Activated CD4-positive, alpha-beta memory T cell treated with anti-CD3 and anti-CD28 coated beads for 36 hours (primary cell): ENCODE measurements at regions of chr11 and their contacts with region 1.

Region 1: DNA sequence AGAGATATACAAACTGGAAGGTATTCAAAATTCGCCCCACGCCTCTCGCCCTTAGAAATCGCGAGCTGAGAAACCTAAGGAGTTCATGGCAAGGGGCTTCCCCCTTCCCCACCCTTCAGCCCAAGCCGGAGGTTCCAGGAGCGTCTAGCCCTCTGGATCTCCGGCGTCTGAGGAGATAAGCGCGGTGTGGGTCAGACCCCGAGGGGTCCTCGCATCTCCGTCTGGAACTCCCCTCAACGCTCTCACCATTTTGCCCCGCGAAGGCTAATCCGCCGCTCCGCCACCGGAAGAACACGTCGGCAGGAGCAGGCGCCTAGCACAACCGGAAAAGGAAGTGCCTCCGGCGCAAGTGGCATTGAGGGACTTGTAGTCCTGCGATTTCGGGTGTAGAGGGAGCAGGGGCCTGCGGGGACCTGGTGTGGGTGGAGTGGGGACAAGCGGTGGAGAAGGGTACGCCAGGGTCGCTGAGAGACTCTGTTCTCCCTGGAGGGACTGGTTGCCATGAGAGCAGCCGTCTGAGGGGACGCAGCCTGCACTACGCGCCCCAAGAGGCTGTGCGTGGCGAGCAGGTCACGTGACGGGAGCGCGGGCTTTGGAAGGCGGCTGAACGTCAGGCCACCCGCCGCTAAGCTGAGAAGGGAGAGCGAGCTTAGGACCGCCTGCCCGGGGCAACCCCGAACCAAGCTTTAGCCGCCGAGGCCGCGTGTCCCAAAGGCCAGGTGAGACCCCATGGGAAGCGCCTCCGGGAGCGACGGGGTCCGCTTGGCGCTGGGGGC is at the starts of genes FEN1 and TMEM258:
- DNase-seq: peak; percentile 92
- H3K4me3 Mint-ChIP-seq: peak within 1 kb of the TSS; percentile 88
- H3K27ac Mint-ChIP-seq: peak within 1 kb of the TSS; percentile 99
- H3K4me1 Mint-ChIP-seq: peaks cover 47% of the 10 kb centered on the region
- H3K27me3 Mint-ChIP-seq: no peaks in the 10 kb centered on the region
- total RNA-seq, gene FEN1: 108 to 111 TPM
- total RNA-seq, gene TMEM258: 191 to 192 TPM

Region 2: GRCh38 chr11:61281581-61282250 is 510.8 kb before region 1 on chr11:
- CTCF ChIA-PET with region 1: no interaction called
- POLR2A ChIA-PET with region 1: no interaction called
- intact Hi-C with region 1: no loop called
- DNase-seq: peak; percentile 36
- H3K4me3 Mint-ChIP-seq: no peak overlapping the region
- H3K27ac Mint-ChIP-seq: no peak overlapping the region
- H3K4me1 Mint-ChIP-seq: no peaks in the 10 kb centered on the region
- H3K27me3 Mint-ChIP-seq: no peaks in the 10 kb centered on the region

Region 3: GRCh38 chr11:61711498-61711897 is 81.0 kb before region 1 on chr11:
- CTCF ChIA-PET with region 1: no interaction called
- POLR2A ChIA-PET with region 1: no interaction called
- intact Hi-C with region 1: no loop called
- DNase-seq: no peak
- H3K4me3 Mint-ChIP-seq: no peak overlapping the region
- H3K27ac Mint-ChIP-seq: no peak overlapping the region
- H3K4me1 Mint-ChIP-seq: no peaks in the 10 kb centered on the region
- H3K27me3 Mint-ChIP-seq: no peaks in the 10 kb centered on the region

Region 4: DNA sequence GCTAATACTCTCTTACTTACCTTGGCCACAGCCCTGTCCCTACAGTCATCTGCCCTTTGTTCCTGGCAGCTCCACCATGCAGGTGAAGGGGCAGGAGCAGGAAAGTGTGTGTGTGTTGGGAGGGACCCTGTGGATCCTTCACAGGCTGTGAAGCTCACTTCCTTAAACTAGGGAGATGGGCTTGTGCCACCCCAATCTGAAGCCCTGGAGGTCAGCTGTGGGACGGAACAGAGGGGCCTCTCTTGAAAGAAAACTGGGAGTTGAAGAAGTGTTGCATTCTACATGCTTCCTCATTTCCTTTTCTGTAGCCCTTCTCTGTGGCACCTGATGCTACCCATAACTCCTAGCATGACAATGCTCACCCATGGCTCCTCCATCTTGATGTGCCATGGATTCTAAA is 12.6 kb after region 1 on chr11:
- CTCF ChIA-PET with region 1: interaction called, 82 read pairs
- POLR2A ChIA-PET with region 1: interaction called, 9 read pairs
- intact Hi-C with region 1: no loop called
- DNase-seq: no peak
- H3K4me3 Mint-ChIP-seq: no peak overlapping the region
- H3K27ac Mint-ChIP-seq: no peak overlapping the region
- H3K4me1 Mint-ChIP-seq: no peaks in the 10 kb centered on the region
- H3K27me3 Mint-ChIP-seq: no peaks in the 10 kb centered on the region

Region 5: GRCh38 chr11:61816736-61817455 is 24.4 kb after region 1 on chr11 and contains the start of gene FADS1:
- CTCF ChIA-PET with region 1: interaction called, 82 read pairs
- POLR2A ChIA-PET with region 1: interaction called, 26 read pairs
- intact Hi-C with region 1: loop called (anchors 2 kb)
- DNase-seq: peak; percentile 92
- H3K4me3 Mint-ChIP-seq: peak within 1 kb of the TSS; percentile 83
- H3K27ac Mint-ChIP-seq: peak within 1 kb of the TSS; percentile 65
- H3K4me1 Mint-ChIP-seq: peaks cover 10% of the 10 kb centered on the region
- H3K27me3 Mint-ChIP-seq: peaks cover 12% of the 10 kb centered on the region
- total RNA-seq, gene FADS1: 24.9 to 26.5 TPM

Region 6: DNA sequence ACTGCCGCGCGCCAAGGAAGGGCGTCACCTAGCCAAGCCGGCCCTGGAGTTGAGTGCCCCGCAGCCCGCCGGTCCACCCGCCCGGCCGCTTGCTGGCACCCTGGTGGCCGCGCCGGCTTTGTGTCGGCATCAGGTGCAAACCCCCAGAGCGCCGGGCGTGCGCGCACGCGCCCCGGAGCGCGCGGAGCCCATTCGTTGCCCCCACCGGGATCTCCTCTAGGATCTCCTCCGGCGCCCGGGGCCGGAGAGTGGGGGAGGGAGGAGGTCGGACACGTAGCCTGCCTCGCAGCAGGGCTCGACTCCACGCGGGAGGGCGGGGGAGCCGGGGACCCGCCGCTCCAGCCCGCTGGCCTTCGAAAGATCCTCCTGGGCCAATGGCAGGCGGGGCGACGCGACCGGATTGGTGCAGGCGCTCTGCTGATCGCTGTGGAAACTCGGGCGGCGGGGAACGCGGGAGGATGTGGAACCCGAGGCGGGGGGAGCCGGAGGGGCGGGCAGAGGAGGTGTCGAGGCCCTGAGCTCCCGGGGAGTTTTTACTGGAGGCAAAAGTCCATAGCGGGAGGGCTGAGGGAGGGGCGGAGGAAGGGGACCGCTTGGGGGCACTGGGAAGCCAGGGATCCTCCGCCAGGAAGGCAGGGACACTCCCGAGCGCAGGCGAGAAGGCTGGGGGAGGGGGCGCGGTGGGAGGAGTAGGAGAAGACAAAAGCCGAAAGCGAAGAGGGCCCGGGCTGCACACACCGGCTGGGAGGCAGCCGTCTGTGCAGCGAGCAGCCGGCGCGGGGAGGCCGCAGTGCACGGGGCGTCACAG is 35.3 kb after region 1 on chr11 and contains the start of gene FADS2:
- CTCF ChIA-PET with region 1: interaction called, 5 read pairs
- POLR2A ChIA-PET with region 1: interaction called, 8 read pairs
- intact Hi-C with region 1: loop called (anchors 5 kb)
- DNase-seq: peak; percentile 89
- H3K4me3 Mint-ChIP-seq: peak within 1 kb of the TSS; percentile 85
- H3K27ac Mint-ChIP-seq: peak within 1 kb of the TSS; percentile 52
- H3K4me1 Mint-ChIP-seq: peaks cover 8% of the 10 kb centered on the region
- H3K27me3 Mint-ChIP-seq: peaks cover 15% of the 10 kb centered on the region
- total RNA-seq, gene FADS2: 58.2 to 60.8 TPM

Region 7: GRCh38 chr11:61947486-61948210 is 155.2 kb after region 1 on chr11:
- CTCF ChIA-PET with region 1: interaction called, 33 read pairs
- POLR2A ChIA-PET with region 1: no interaction called
- intact Hi-C with region 1: loop called (anchors 1 kb)
- DNase-seq: peak; percentile 80
- H3K4me3 Mint-ChIP-seq: no peak overlapping the region
- H3K27ac Mint-ChIP-seq: no peak overlapping the region
- H3K4me1 Mint-ChIP-seq: no peaks in the 10 kb centered on the region
- H3K27me3 Mint-ChIP-seq: peaks cover 2% of the 10 kb centered on the region

Region 8: GRCh38 chr11:61967116-61967923 is 174.8 kb after region 1 on chr11 and contains the start of gene FTH1:
- CTCF ChIA-PET with region 1: interaction called, 5 read pairs
- POLR2A ChIA-PET with region 1: interaction called, 10 read pairs
- intact Hi-C with region 1: no loop called
- DNase-seq: peak; percentile 90
- H3K4me3 Mint-ChIP-seq: peak within 1 kb of the TSS; percentile 84
- H3K27ac Mint-ChIP-seq: peak within 1 kb of the TSS; percentile 93
- H3K4me1 Mint-ChIP-seq: peaks cover 68% of the 10 kb centered on the region
- H3K27me3 Mint-ChIP-seq: no peaks in the 10 kb centered on the region
- total RNA-seq, gene FTH1: 915 to 922 TPM

Region 9: GRCh38 chr11:62123669-62124185 is 331.2 kb after region 1 on chr11 and contains the start of gene INCENP:
- CTCF ChIA-PET with region 1: interaction called, 3 read pairs
- POLR2A ChIA-PET with region 1: no interaction called
- intact Hi-C with region 1: loop called (anchors 1 kb)
- DNase-seq: peak; percentile 97
- H3K4me3 Mint-ChIP-seq: peak within 1 kb of the TSS; percentile 98
- H3K27ac Mint-ChIP-seq: peak within 1 kb of the TSS; percentile 86
- H3K4me1 Mint-ChIP-seq: peaks cover 22% of the 10 kb centered on the region
- H3K27me3 Mint-ChIP-seq: no peaks in the 10 kb centered on the region
- total RNA-seq, gene INCENP: 128 to 133 TPM